ENCODE measurements at regions of chr14 and their contacts with region 1.

Region 1: DNA sequence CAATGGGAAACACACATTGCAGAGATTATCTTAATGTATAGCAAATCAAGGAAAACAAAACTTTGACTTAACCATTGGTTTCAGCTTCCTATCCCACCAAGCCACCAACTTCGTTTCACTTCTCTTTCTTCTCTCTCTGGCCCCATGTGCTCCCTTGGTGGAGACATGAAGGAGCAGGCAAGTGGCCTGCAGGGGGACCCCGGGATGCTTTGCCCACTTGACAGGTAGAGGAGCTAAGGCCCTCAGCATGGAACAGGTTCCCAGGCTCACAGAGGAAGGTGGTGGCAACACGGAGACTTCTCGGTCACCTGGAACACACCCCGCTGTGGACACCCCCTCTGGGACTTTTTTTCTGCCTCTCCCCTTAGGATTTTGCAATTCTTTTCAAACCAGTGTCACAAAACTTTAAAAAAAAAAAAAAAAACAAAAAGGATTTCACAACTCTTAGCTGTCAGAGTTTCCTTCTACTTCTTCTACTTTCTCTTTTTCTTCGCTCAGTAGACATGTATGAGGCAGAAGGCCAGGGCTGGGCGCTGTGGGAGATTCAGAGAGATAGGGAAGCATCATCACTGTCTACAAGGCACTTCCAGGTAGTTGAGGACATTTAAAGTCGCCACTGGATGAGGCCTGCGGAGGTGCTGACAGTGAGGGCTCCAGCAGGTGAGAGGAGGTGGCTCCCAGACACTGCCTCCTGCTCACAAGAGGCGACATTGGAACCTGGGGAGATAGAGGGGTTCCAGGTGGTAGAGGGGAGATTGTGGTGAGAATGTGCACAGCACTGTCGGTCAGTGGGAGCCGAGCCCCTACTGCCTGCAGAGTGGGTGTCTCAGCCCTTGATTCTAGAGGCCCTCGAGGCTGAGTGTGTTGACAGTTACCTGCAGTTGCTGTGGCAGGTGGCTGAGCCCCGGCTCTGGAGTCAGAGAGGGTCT is 119.6 kb downstream of the GCH1 start:
- DNase-seq: no peak
- ATAC-seq: peak; percentile 99
- H3K4me3 ChIP-seq: no peak overlapping the region
- H3K27ac ChIP-seq: no peak overlapping the region
- H3K4me1 ChIP-seq: peaks cover 10% of the 10 kb centered on the region
- H3K27me3 ChIP-seq: no peaks in the 10 kb centered on the region
- CTCF ChIP-seq: peak; percentile 59 to 76 (median 66)
- EP300 ChIP-seq: 0 out of 4 replicates have a peak, but pooled peaks of 1 of the 2 experiments have one; percentile 42
- POLR2A ChIP-seq: no peak
- RAD21 ChIP-seq: peak; percentile 67

Region 2: DNA sequence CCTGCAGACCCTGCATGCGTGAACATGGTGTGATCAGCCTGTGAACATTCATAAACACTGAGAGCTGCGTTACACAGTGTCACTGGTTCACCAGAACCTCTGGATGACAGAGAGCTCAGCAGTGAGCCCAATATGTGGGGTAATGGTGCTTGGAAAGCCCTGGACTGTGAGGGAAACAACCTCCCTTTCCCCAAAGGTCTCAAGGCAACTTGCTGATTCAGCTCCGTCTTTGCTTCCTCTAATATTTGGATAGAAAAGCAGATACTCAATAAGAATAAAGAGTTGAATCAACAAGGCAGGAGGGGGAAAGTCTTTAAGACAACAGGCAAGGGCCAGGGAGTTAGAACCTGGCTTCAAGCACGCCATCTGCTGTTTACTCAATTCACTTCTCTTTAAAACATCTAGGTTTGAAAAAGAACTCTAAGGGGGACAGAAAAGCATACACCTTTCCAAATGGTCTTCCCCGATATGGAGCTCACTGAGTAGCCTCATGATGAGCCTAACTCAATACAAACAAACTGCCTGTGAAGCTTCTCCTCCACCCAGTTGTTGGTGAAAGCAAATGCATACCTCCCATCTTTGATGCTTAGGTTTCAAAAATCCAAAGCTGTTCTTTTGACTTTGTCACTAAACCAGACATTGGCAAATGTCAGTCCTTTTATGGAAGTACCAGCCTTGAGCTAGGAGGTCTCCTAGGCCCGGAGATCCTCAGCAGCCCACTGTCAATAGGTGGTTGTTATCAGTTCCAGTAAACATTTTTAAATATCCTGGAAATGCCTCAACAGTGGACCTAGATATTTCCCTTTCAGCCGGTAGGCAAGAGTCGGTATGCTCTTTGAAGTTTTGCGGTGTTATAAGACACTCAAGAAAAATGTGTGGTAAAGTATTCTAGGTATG is 140.0 kb before region 1 on chr14:
- CTCF ChIA-PET with region 1: no interaction called
- POLR2A ChIA-PET with region 1: no interaction called
- RAD21 ChIA-PET with region 1: no interaction called
- SMC1A ChIA-PET with region 1: no interaction called
- in situ Hi-C with region 1: no loop called
- intact Hi-C with region 1: no loop called
- DNase-seq: no peak
- ATAC-seq: peak; percentile 76
- H3K4me3 ChIP-seq: no peak overlapping the region
- H3K27ac ChIP-seq: no peak overlapping the region
- H3K4me1 ChIP-seq: no peaks in the 10 kb centered on the region
- H3K27me3 ChIP-seq: 0 out of 4 replicates have a peak, but pooled peaks cover 0 to 3% of the 10 kb centered on the region in 2 experiments
- CTCF ChIP-seq: peak; percentile 29 to 58 (median 35); a peak in 5 of 6 replicates
- EP300 ChIP-seq: no peak
- POLR2A ChIP-seq: no peak
- RAD21 ChIP-seq: peak; percentile 56

Region 3: DNA sequence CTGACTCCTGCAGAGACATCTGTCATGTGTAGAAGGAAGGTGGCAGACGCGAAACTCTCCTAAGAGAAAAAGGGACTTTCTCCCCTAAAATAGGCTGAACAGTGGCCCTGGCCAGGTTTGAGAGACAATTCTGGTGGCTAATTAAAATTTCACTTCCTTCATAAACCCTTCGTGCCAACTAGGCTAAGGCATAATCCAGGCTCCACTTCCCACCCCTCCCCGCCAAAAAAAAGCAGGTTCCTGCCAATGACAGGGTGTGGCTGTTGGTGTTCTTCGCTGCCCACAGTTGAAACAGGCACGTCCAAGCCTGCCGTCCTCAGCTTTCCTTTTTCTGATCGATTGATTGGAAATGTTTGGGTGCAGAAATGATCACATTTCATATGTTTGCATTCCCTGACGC is 25.0 kb before region 1 on chr14:
- CTCF ChIA-PET with region 1: no interaction called
- POLR2A ChIA-PET with region 1: no interaction called
- RAD21 ChIA-PET with region 1: no interaction called
- SMC1A ChIA-PET with region 1: no interaction called
- in situ Hi-C with region 1: no loop called
- intact Hi-C with region 1: no loop called
- DNase-seq: no peak
- ATAC-seq: no peak
- H3K4me3 ChIP-seq: no peak overlapping the region
- H3K27ac ChIP-seq: no peak overlapping the region
- H3K4me1 ChIP-seq: no peaks in the 10 kb centered on the region
- H3K27me3 ChIP-seq: no peaks in the 10 kb centered on the region
- CTCF ChIP-seq: no peak
- EP300 ChIP-seq: no peak
- POLR2A ChIP-seq: no peak
- RAD21 ChIP-seq: no peak

Region 4: DNA sequence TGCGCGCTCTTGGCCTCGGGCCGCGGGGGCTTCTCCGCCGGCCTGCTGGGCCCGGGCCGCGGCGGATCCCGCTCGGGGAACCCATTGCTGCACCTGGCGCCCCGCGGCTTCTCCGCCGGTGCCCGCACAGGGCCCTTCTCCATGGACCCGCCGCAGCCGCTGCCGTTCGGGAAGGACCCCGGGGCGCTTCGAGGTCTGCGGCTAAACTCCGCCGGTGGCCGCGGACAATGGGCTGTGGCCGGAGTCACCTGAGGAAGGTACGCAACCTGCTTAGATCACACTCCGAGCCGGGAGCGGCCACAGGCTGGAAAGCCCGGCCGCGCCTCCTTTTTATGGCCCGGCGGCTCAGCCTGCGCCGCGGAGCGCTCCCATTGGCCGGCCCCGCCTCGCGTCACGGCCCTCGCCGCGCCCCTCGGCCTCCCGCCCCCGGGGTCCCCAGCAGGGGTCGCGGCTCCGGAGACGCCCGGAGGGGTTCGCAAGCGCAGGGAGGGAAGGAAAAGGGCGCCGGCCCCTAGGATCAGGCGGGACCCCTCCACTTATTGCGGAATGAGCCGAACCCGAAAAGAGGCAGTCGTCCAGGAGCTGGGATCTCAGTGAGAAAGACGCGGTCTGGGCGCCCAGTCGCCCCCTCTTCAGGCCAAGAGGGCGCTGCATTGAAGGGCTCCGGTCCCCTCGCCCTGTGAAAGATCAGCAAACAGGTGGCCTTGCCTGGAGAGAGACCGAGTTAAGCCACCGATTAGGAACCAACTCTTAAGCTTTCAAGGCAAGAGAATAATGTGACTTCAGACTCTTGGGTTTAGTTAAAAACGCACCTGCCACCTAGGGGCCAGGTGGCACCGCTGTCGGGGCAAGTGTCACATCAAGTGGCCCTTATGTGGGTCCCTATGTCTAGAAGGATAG is 119.8 kb after region 1 on chr14 and contains the start of gene GCH1:
- CTCF ChIA-PET with region 1: no interaction called
- POLR2A ChIA-PET with region 1: no interaction called
- RAD21 ChIA-PET with region 1: no interaction called
- SMC1A ChIA-PET with region 1: no interaction called
- in situ Hi-C with region 1: no loop called
- intact Hi-C with region 1: loop called (anchors 5 kb)
- DNase-seq: no peak
- ATAC-seq: peak; percentile 90
- H3K4me3 ChIP-seq: peak within 1 kb of the TSS; percentile 73
- H3K27ac ChIP-seq: peak within 1 kb of the TSS; percentile 76
- H3K4me1 ChIP-seq: peaks cover 3% of the 10 kb centered on the region
- H3K27me3 ChIP-seq: no peaks in the 10 kb centered on the region
- CTCF ChIP-seq: peak; percentile 34 to 51 (median 45)
- EP300 ChIP-seq: no peak
- POLR2A ChIP-seq: peak; percentile 99
- RAD21 ChIP-seq: peak; percentile 30; the same call in 1 of the 2 replicates
- polyA plus RNA-seq, gene GCH1: 25.1 to 26.0 TPM

Measured in GM12878 (cell line).